HEK293T (cell line): ENCODE measurements at regions of chrX and their contacts with region 1.

Region 1: GRCh38 chrX:54639346-54640102 is 109.5 kb downstream of the GNL3L start:
- DNase-seq: peak; percentile 83

Region 2: GRCh38 chrX:54808605-54809483 is 169.3 kb after region 1 on chrX:
- CTCF ChIA-PET with region 1: no interaction called
- POLR2A ChIA-PET with region 1: interaction called, 34 read pairs
- DNase-seq: peak; percentile 95